Endothelial cell of umbilical vein (primary cell): ENCODE measurements at regions of chr1 and their contacts with region 1.

Region 1: DNA sequence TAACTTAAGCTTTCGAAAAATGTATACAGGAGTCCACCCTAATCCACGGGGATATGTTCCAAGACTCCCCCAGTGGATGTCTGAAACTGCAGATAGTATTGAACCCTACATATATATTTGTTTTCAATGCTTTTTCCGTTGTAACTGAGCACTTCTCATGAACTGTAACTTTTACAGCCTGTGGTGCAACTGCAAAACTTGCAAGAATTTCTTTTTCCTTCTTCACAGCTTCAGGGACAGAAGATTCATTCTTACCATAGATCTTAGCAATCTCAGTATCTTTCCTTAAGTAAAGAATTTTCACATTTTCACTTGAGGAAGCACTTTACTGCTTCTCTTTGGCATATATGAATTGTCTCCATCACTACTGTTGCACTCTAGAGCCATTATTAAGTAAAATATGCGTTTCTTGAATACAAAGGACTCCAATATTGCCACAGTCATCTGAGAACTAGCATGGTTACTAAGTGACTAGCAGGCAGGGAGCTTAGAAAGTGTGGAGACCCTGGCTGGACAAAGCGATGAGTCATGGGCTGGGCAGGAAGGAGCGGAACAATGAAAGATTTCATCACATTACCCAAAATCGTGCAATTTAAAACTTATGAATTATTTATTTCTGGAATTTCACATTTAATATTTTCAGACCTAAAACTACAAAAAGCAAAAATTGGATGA is 14.1 kb downstream of the DPYD start:
- DNase-seq: peak; percentile 88
- H3K4me3 ChIP-seq: no peak overlapping the region
- H3K27ac ChIP-seq: peak overlapping the region; percentile 68
- H3K4me1 ChIP-seq: peaks cover 43% of the 10 kb centered on the region
- H3K27me3 ChIP-seq: no peaks in the 10 kb centered on the region
- CTCF ChIP-seq: no peak
- POLR2A ChIP-seq: no peak

Region 2: DNA sequence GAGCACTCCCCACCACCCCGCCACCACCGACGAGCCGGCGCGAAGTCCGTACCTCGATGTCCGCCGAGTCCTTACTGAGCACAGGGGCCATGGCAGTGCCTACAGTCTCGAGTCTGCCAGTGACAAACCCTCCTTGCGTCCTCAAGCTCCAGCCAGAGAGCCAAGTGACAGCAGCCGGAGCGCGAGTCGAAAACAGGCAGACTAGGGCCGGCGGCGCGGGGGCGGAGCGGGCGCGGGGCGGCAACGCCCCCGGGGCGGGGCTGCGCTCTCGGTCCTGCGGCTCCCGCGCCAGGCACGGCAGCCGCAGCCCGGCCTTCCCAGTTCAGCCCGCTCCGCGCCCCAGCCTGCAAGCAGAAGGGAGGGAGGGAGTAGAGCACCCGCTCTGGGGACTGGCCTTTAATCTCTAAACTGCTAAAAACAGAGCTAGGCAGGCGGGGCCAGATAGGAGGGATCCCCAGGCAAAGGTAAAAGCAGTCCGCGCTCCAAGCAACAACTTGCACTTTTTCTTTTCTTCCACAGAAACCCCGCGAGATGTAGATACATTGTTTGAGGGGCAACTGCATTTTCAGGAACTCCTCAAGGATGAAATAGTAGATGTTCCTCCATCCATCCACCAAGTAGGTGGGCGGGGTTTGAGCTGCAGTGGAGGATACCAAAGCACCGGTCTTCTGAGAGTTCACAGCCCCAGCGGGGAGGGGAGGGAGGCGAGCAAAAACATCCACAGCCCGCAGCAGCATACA is 14.3 kb after region 1 on chr1 and contains the start of gene DPYD:
- CTCF ChIA-PET with region 1: interaction called, 33 read pairs
- POLR2A ChIA-PET with region 1: interaction called, 8 read pairs
- dilution Hi-C with region 1: no loop called
- intact Hi-C with region 1: loop called (anchors 2 kb)
- DNase-seq: peak; percentile 87
- H3K4me3 ChIP-seq: peak within 1 kb of the TSS; percentile 94 to 97 (median 97)
- H3K27ac ChIP-seq: peak within 1 kb of the TSS; percentile 77
- H3K4me1 ChIP-seq: peaks cover 13% of the 10 kb centered on the region
- H3K27me3 ChIP-seq: no peaks in the 10 kb centered on the region
- CTCF ChIP-seq: no peak
- POLR2A ChIP-seq: peak; percentile 41
- total RNA-seq, gene DPYD: 15.1 and 17.9 TPM in 2 replicates

Region 3: DNA sequence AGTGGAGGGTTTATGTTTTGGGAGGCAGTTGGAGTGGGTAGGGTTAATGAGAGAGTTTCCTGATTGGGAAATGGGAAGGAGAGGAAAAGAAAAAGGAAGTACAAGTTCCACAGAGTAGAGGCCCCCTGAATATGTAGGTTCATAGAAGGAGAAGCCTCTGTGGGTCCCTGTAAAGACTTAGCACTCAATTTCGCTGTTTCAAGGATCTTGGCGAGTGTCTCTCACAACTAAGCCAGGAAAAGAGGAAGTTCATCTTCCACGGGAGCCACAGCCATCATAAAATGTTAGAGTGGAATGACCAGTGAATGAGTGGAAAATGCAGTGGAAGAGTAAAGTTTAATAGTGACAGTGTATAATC is 31.6 kb after region 1 on chr1:
- CTCF ChIA-PET with region 1: no interaction called
- POLR2A ChIA-PET with region 1: no interaction called
- dilution Hi-C with region 1: no loop called
- intact Hi-C with region 1: loop called (anchors 2 kb)
- DNase-seq: no peak
- H3K4me3 ChIP-seq: no peak overlapping the region
- H3K27ac ChIP-seq: peak overlapping the region; percentile 64
- H3K4me1 ChIP-seq: peaks cover 26% of the 10 kb centered on the region
- H3K27me3 ChIP-seq: no peaks in the 10 kb centered on the region
- CTCF ChIP-seq: no peak
- POLR2A ChIP-seq: no peak

Region 4: DNA sequence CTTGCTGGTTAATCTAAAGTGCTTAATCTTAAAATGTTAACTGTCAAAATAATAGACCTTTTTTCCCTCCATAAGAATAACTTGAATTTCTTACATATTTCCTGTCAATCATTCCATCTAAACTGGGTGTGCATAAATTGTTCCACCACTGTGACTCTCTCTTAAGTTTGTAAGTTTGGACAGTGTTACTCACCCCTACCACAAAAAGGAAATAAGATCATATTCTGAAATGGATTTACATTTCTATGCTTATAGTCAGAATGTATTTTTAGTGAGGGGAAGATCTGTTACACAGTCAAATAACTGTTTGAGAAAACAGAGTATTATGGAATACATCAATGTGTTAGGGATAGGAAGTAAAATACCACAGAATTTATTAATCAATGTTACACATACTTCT is 123.8 kb after region 1 on chr1:
- CTCF ChIA-PET with region 1: no interaction called
- POLR2A ChIA-PET with region 1: no interaction called
- dilution Hi-C with region 1: no loop called
- intact Hi-C with region 1: no loop called
- DNase-seq: peak; percentile 62
- H3K4me3 ChIP-seq: no peak overlapping the region
- H3K27ac ChIP-seq: peak overlapping the region; percentile 76
- H3K4me1 ChIP-seq: peaks cover 22% of the 10 kb centered on the region
- H3K27me3 ChIP-seq: no peaks in the 10 kb centered on the region
- CTCF ChIP-seq: no peak
- POLR2A ChIP-seq: no peak